ENCODE measurements at regions of chr3 and their contacts with region 1.

Region 1: GRCh38 chr3:179105881-179106280 is 34.3 kb upstream of the ZMAT3 start:
- DNase-seq: no peak
- H3K4me3 Mint-ChIP-seq: no peak overlapping the region
- H3K27ac Mint-ChIP-seq: no peak overlapping the region
- H3K4me1 Mint-ChIP-seq: peaks cover 1% of the 10 kb centered on the region
- H3K27me3 Mint-ChIP-seq: no peaks in the 10 kb centered on the region

Region 2: GRCh38 chr3:179272385-179272784 is 166.5 kb after region 1 on chr3:
- CTCF ChIA-PET with region 1: interaction called, 3 read pairs
- intact Hi-C with region 1: loop called (anchors 1 kb)
- DNase-seq: peak; percentile 23
- H3K4me3 Mint-ChIP-seq: no peak overlapping the region
- H3K27ac Mint-ChIP-seq: no peak overlapping the region
- H3K4me1 Mint-ChIP-seq: no peaks in the 10 kb centered on the region
- H3K27me3 Mint-ChIP-seq: peaks cover 6% of the 10 kb centered on the region